Calu3 (cell line): ENCODE measurements at regions of chr11 and their contacts with region 1.

Region 1: DNA sequence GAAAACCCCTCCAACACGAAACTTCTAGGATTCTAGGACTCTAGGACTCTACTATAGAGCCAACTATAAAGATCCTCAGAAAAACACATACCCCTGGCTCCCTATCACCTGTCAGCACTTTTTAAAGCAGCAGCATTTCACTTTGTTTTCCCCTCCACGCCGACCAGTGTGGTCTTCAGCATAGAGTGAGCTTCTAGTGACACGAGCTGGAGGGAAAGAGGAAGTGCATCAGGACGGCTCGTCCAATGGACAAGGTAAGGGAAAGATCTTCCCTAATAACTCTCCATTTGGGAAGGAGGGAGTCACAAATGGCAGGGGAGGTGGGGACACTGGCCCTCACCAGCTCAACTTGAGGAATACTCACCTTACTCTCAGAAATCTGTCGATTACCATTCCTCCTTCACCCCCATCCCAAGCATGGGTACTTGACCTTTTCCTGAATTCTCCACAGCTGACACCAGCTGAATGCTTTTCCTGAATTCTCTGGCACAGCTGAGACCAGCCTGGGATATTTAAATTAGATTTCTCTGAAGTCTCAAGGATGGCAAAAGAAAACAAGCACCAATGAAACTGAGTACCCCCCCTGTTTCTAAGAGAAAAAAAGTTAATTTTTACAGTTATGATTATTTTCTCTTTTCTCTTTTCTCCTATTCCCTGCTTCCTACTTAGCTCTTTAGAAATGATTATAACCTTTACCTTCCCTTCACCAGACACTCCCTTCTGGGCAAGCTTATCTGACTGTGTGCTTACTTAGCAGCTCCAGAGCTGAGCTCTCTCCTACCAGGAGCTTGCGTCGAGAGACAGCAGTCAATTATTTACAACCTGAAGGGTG is 33.3 kb upstream of the NNMT start:
- DNase-seq: peak; percentile 36
- H3K4me3 Mint-ChIP-seq: no peak overlapping the region
- H3K27ac Mint-ChIP-seq: no peak overlapping the region
- H3K4me1 Mint-ChIP-seq: no peaks in the 10 kb centered on the region
- H3K27me3 Mint-ChIP-seq: peaks cover 29% of the 10 kb centered on the region
- CTCF ChIP-seq: peak; percentile 45

Region 2: GRCh38 chr11:113806406-113806805 is 456.5 kb before region 1 on chr11:
- CTCF ChIA-PET with region 1: interaction called, 5 read pairs
- intact Hi-C with region 1: loop called (anchors 2 kb)
- DNase-seq: peak; percentile 34
- H3K4me3 Mint-ChIP-seq: no peak overlapping the region
- H3K27ac Mint-ChIP-seq: no peak overlapping the region
- H3K4me1 Mint-ChIP-seq: no peaks in the 10 kb centered on the region
- H3K27me3 Mint-ChIP-seq: no peaks in the 10 kb centered on the region
- CTCF ChIP-seq: peak; percentile 42

Region 3: DNA sequence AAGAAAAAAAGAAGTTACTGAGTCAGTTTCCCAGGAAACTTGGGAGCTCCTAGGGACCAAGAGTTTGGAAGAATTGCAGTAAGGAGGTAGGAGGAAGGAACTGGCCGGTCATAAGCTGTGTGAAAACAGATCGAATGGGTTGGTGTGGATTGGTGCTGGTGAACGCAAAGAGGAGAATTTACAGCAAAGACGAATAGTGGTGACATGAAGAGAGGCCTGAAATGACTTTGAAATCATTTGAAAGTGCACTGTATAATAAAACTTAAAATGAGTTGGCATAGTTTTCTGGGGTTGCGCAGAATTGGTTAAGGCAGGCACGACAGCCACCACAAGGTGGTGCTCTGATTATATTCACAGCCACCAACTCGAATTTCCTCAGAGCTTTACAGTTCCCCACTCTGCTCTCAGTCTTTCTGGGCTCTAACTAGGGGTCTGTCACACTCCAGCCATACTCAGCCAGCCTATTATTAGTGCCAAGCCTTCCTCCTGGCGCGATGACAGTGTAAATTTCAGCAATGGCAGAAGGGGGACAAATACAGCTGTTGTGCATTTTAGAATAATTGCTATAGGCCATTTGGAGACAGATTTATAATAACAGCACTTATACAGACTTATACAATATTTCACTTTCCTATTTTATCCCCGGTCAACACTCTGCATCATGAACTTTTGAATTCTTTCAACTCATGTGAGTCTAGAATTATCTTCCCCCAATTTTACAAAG is 366.6 kb before region 1 on chr11:
- CTCF ChIA-PET with region 1: interaction called, 13 read pairs
- intact Hi-C with region 1: loop called (anchors 1 kb)
- DNase-seq: peak; percentile 27
- H3K4me3 Mint-ChIP-seq: no peak overlapping the region
- H3K27ac Mint-ChIP-seq: no peak overlapping the region
- H3K4me1 Mint-ChIP-seq: no peaks in the 10 kb centered on the region
- H3K27me3 Mint-ChIP-seq: peaks cover 32% of the 10 kb centered on the region
- CTCF ChIP-seq: peak; percentile 38

Region 4: DNA sequence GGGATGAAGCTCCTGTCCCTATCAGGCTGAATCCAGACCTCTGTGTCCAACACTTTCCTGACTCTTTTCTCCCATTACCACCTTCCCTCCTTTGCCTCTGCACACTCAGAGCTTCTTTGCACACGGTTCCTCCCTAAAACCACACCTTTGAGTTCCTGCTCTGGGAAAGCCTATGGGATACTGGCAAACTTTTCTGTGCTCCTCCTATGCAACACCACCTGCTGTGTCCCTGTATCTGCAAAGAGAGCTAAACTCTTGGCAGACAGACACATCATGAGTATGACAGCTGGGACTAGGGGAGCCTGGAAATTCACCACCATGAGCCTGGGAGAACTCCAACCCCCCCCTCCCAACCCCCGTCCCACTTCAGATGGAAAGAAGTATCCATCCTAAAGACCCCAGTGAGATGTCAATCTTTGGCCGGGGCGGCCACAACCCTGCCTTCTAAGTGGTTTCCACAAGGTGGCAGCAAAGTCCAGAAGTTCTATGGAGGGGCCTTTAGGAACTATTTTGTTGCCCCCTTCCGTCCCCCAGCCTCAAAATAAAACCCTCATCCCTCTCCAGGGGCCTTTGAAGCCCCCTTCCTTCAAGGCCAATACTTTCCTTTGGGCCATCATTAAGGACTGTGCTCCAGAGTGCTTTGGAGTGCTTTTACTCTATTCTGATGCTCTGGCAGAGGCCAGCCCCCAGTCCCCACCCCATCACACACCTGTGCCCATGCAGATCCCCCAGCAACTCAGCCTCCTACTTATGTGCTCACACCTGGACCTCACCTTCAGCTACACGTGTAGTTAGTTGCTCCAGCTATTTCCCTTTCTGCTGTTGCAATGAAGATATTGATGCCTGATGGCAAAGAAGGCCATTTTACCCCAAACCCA is 268.6 kb before region 1 on chr11:
- CTCF ChIA-PET with region 1: interaction called, 35 read pairs
- intact Hi-C with region 1: loop called (anchors 1 kb)
- DNase-seq: peak; percentile 11
- H3K4me3 Mint-ChIP-seq: no peak overlapping the region
- H3K27ac Mint-ChIP-seq: no peak overlapping the region
- H3K4me1 Mint-ChIP-seq: no peaks in the 10 kb centered on the region
- H3K27me3 Mint-ChIP-seq: peaks cover 86% of the 10 kb centered on the region
- CTCF ChIP-seq: peak; percentile 64

Region 5: DNA sequence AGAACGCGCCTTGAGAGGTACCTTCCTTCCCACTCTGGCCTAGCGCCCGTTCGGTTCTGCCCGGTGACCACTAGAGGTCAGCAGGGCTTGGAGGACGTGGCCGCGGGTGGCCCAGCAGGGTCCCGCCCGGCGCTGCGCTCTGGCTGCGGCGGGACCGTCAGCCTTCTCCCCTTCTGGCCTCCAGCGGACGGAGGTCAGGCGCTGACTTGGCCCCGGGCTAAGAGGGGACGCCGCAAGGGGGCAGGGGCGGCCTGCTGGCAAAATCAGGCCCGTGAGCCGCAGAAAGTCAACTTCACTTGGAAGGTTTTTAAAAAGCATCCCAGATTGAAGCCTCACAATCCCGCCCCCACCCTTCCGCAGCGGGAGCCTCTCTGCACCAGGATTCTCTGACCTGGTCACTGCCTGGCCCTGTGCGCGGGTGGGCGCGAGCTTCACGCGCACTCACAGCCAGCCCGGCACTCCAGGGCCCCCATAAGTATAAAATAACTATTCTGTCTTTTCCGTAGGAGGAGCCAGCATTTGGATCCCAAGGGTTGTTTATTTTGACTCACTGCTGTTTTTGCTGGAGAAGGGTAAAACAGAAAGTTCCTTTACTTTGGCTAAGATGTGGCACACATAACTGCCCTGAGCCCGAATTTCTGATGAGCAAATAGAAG is 226.6 kb before region 1 on chr11:
- CTCF ChIA-PET with region 1: no interaction called
- intact Hi-C with region 1: loop called (anchors 2 kb)
- DNase-seq: peak; percentile 69
- H3K4me3 Mint-ChIP-seq: peak overlapping the region; percentile 55
- H3K27ac Mint-ChIP-seq: no peak overlapping the region
- H3K4me1 Mint-ChIP-seq: no peaks in the 10 kb centered on the region
- H3K27me3 Mint-ChIP-seq: peaks cover 60% of the 10 kb centered on the region
- CTCF ChIP-seq: peak; percentile 26

Region 6: DNA sequence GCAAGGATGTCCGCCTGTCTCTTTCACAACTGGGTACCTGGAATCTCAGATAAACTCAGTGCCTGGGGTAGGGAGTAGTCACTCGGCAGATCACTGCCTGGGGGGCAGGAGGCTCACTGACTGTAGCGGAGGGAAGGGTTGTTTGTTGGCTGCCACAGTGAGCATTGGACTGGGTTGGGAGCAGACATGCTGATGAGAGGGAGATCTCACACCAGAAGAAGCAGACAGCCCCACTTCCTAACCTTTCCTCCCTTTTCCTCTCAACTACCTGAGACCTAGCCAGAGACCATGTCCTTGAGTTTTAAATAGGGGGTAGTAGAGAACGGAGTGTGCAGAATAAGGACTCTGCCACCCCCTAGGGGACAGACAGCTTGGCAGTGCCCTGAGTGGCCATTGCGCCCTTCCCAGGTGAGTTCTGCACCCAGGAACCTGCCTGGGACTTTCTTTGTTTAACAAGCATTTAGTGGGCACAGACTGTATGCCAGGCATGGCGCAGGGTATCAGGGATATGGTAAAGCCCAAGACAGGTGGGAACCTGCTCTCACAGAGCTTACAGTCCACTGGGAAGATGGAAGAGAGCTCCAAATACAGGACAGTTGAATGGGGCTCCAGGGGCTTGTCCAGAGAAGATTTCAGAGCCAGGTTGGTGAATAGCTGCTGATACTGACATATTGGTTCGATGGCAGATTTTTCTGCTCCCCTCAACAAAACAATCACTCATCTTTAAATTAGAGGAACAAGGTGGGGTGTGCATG is 82.4 kb before region 1 on chr11:
- CTCF ChIA-PET with region 1: no interaction called
- intact Hi-C with region 1: loop called (anchors 5 kb)
- DNase-seq: peak; percentile 47
- H3K4me3 Mint-ChIP-seq: no peak overlapping the region
- H3K27ac Mint-ChIP-seq: no peak overlapping the region
- H3K4me1 Mint-ChIP-seq: no peaks in the 10 kb centered on the region
- H3K27me3 Mint-ChIP-seq: peaks cover 100% of the 10 kb centered on the region
- CTCF ChIP-seq: peak; percentile 35

Region 7: DNA sequence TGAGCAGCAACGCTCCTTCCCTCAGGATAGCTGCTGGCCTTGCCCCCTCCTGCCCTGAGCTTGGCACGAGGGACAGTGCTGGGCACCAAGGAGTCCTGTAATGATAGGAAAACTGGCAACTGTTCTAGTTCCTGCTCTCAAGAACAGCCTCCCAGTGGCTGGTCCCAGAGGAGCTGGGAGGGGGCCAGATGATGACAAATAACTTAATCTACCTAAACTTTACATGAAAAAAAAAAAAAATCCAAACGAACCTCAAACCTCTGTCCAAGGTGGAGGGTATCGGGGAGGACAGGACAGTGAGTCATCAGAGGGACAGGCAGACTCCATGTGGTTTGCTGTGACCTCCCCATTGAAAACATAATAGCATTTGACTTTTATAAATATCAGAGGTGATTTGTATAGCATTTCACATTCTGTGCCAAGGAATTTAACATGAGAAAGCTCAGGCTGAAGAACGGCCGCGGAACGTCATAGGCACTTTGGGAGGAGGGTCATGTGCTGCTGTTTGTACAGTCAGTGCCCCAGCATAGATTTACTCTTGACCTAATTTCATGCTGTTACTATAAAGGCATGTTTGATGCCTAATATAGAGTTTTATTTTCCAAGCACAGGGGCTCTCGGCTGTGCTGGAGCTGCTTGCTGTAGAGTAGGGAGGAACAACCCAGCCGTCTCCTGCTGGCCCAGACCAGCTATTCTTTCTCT is 64.9 kb before region 1 on chr11:
- CTCF ChIA-PET with region 1: interaction called, 5 read pairs
- intact Hi-C with region 1: loop called (anchors 2 kb)
- DNase-seq: peak; percentile 47
- H3K4me3 Mint-ChIP-seq: no peak overlapping the region
- H3K27ac Mint-ChIP-seq: peak overlapping the region; percentile 53
- H3K4me1 Mint-ChIP-seq: peaks cover 17% of the 10 kb centered on the region
- H3K27me3 Mint-ChIP-seq: peaks cover 7% of the 10 kb centered on the region
- CTCF ChIP-seq: no peak

Region 8: DNA sequence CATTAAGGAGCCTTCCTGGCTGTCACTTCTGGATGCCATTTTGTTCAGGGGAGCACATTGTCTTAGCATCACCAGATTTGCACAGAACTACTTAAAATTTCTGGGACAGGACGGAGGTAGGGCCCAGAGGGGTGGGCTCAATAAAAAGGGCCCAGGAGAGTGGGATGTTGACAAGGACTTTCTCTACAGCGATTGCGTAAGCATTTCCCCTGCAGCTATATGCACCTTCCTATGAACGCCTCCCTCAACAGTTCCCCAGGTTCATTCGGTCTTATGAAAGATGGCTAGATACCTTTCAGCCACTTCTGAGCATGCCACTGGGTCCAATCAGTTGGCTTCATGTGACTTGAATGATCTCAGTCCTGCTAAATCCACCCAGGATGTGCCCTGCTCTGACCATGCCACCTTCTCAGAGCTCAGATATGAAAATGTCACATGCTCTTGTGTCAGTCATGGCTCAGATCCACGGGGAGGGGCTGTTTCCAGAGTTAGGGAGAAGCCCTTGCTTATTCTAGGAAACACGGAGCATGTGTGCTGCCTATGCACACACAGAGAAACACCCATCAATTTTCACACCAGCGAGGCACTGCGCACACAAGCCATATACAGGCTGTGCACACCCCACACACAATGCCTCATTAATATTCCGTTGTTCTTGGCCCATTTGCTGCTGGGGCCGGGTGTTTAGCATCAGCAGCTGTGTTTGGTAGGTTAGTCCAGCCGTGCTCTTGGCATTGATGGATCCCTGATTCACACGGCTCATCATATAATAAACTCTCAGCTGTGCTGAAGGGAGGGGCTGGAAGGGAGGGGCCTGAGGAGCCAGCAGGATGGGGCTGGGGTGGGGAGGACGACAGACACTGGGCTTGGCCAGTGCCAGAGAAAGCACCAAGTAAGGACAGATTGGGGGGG is 19.2 kb before region 1 on chr11:
- CTCF ChIA-PET with region 1: no interaction called
- intact Hi-C with region 1: no loop called
- DNase-seq: no peak
- H3K4me3 Mint-ChIP-seq: no peak overlapping the region
- H3K27ac Mint-ChIP-seq: no peak overlapping the region
- H3K4me1 Mint-ChIP-seq: no peaks in the 10 kb centered on the region
- H3K27me3 Mint-ChIP-seq: peaks cover 87% of the 10 kb centered on the region
- CTCF ChIP-seq: no peak

Region 9: GRCh38 chr11:114321621-114322257 is 58.8 kb after region 1 on chr11:
- CTCF ChIA-PET with region 1: no interaction called
- intact Hi-C with region 1: no loop called
- DNase-seq: no peak
- H3K4me3 Mint-ChIP-seq: no peak overlapping the region
- H3K27ac Mint-ChIP-seq: no peak overlapping the region
- H3K4me1 Mint-ChIP-seq: peaks cover 9% of the 10 kb centered on the region
- H3K27me3 Mint-ChIP-seq: no peaks in the 10 kb centered on the region
- CTCF ChIP-seq: no peak